ENCODE measurements at regions of chr17 and their contacts with region 1.

Region 1: GRCh38 chr17:45270828-45271418 is 9.0 kb upstream of the SPATA32 start:
- DNase-seq: peak in 1 of 2 experiments; percentile 91
- H3K4me3 ChIP-seq: no peak overlapping the region
- H3K27ac ChIP-seq: no peak overlapping the region
- H3K4me1 ChIP-seq: peaks cover 0 to 1% (median 0%) of the 10 kb centered on the region in 4 experiments; a peak in 1 of 7 replicates
- H3K27me3 ChIP-seq: no peaks in the 10 kb centered on the region
- CTCF ChIP-seq: peak; percentile 93 to 100 (median 96)
- EP300 ChIP-seq: no peak
- POLR2A ChIP-seq: no peak
- RAD21 ChIP-seq: peak; percentile 69 to 81

Region 2: DNA sequence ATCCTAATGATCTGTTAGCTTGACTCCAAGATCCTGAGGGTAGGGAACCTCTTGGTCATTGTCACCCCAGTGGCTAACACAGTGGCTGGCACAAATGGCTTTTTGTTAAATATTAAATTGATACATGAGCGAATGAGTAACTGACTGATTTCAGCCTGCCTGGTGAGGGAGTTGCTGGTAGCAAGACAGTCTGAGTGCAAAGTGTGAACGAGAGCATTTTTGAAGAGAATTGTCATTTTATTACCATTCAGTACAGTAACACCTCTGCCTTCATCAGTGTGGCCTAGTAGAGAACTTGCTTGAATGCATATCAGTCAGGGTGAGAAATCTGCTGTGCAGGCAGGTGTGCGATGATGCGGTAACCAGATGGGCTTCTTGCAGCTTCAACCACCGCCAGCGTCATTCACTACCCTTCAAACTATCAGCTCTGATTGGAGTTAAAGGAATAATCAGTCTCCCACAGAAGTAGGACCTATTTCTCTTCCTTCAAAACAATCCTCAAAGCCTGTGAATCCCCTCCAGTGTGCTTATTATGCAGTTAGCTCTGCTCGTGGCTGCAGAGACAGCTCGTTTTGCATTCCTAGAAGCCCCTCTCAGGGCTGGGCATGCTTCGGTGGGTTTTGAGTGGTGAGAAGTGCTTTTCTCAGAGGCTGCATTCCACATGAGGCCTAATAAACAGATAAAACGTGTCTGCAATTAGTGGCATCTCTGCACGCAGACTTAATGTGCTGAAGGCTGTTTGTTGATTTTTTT is 80.2 kb before region 1 on chr17:
- CTCF ChIA-PET with region 1: no interaction called
- POLR2A ChIA-PET with region 1: no interaction called
- DNase-seq: no peak
- H3K4me3 ChIP-seq: no peak overlapping the region
- H3K27ac ChIP-seq: no peak overlapping the region
- H3K4me1 ChIP-seq: no peaks in the 10 kb centered on the region
- H3K27me3 ChIP-seq: no peaks in the 10 kb centered on the region
- CTCF ChIP-seq: no peak
- EP300 ChIP-seq: no peak
- POLR2A ChIP-seq: no peak
- RAD21 ChIP-seq: no peak

Region 3: GRCh38 chr17:45256114-45256966 is 14.6 kb before region 1 on chr17:
- CTCF ChIA-PET with region 1: interaction called, 85 read pairs
- POLR2A ChIA-PET with region 1: interaction called, 16 read pairs
- DNase-seq: no peak
- H3K4me3 ChIP-seq: peak overlapping the region in 1 of 4 experiments; percentile 34; a peak in 1 of 8 replicates
- H3K27ac ChIP-seq: no peak overlapping the region
- H3K4me1 ChIP-seq: peaks cover 0 to 14% (median 5%) of the 10 kb centered on the region in 4 experiments; a peak in 6 of 7 replicates
- H3K27me3 ChIP-seq: peaks cover 0 to 5% (median 2%) of the 10 kb centered on the region in 4 experiments; a peak in 3 of 7 replicates
- CTCF ChIP-seq: peak; percentile 6 to 19 (median 7); a peak in 2 of 4 replicates
- EP300 ChIP-seq: no peak
- POLR2A ChIP-seq: no peak
- RAD21 ChIP-seq: 0 out of 4 replicates have a peak, but pooled peaks of 1 of the 2 experiments have one; percentile 3

Region 4: GRCh38 chr17:45409659-45410076 is 138.7 kb after region 1 on chr17:
- CTCF ChIA-PET with region 1: no interaction called
- POLR2A ChIA-PET with region 1: no interaction called
- DNase-seq: no peak
- H3K4me3 ChIP-seq: no peak overlapping the region
- H3K27ac ChIP-seq: no peak overlapping the region
- H3K4me1 ChIP-seq: peaks cover 0 to 26% (median 13%) of the 10 kb centered on the region in 4 experiments; a peak in 6 of 7 replicates
- H3K27me3 ChIP-seq: no peaks in the 10 kb centered on the region
- CTCF ChIP-seq: no peak
- EP300 ChIP-seq: no peak
- POLR2A ChIP-seq: no peak
- RAD21 ChIP-seq: no peak